ENCODE measurements at regions of chr20 and their contacts with region 1.

Region 1: GRCh38 chr20:33725647-33726571 is 5.8 kb upstream of the PXMP4 start:
- DNase-seq: peak; percentile 77 to 92
- H3K4me3 ChIP-seq: no peak overlapping the region
- H3K27ac ChIP-seq: peak overlapping the region; percentile 28 to 74 (median 69)
- H3K4me1 ChIP-seq: peaks cover 3 to 28% of the 10 kb centered on the region in 2 donors
- H3K27me3 ChIP-seq: no peaks in the 10 kb centered on the region
- CTCF ChIP-seq: no peak
- POLR2A ChIP-seq: no peak

Region 2: DNA sequence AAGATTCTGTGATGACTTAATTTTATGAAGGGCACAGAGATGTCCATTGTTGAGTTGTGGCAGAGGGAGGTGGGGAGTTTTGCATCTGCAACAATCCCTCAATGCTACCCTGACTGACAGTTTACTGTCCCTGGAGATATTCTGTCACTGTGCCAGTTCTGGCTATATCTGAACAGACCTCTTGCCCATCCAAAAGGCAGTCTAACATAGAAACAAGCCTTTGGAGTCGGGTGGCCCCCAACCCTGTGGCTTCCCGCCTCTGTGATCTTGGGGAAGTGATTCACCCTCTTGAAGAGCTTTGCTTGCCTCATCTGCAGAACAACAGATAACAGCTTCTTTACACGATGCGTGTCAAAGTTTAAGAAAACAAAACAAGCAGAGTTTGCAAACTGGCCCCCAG is 35.9 kb before region 1 on chr20:
- intact Hi-C with region 1: loop called (anchors 5 kb)
- DNase-seq: no peak
- H3K4me3 ChIP-seq: no peak overlapping the region
- H3K27ac ChIP-seq: no peak overlapping the region
- H3K4me1 ChIP-seq: peaks cover 22 to 51% of the 10 kb centered on the region in 2 donors
- H3K27me3 ChIP-seq: no peaks in the 10 kb centered on the region
- CTCF ChIP-seq: no peak
- POLR2A ChIP-seq: no peak

Measured in thyroid gland (tissue), 4 donors.